IMR-90 (cell line): ENCODE measurements at regions of chr12 and their contacts with region 1.

Region 1: GRCh38 chr12:1776170-1776948 is 44.0 kb upstream of the LRTM2 start:
- DNase-seq: peak; percentile 76
- ATAC-seq: peak; percentile 41
- H3K4me3 ChIP-seq: no peak overlapping the region
- H3K27ac ChIP-seq: no peak overlapping the region
- H3K4me1 ChIP-seq: peaks cover 14% of the 10 kb centered on the region
- H3K27me3 ChIP-seq: no peaks in the 10 kb centered on the region
- CTCF ChIP-seq: no peak
- POLR2A ChIP-seq: no peak
- RAD21 ChIP-seq: no peak

Region 2: DNA sequence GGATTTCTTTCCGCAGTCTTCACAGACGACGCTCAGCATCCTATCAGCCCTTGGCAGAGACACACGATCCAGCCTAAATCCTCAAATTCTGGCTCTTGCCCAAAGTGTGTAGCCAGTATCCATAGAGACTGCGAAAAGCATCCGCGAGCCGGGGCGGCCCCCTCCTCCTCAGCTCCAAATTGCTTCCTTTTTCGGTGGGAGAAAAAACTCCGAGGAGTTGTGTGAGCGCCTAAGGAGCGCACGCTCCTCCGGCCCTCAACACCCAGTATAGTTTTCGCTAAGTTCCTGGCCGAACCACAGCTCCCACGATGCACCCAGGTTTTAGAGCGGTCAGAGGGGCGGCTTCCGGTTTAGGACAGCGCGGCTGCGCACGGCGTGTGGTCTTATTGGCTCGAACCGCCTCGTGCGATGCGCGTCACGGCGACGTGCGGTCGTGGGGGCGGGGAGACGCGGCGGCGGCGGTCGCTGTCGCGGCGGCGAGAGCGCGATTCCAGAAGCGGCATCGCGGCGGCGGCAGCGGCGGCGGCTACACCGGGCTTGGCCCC is 85.7 kb before region 1 on chr12 and contains the start of gene ADIPOR2:
- CTCF ChIA-PET with region 1: no interaction called
- POLR2A ChIA-PET with region 1: no interaction called
- dilution Hi-C with region 1: no loop called
- in situ Hi-C with region 1: no loop called
- intact Hi-C with region 1: loop called (anchors 2 kb)
- DNase-seq: peak; percentile 96
- ATAC-seq: peak; percentile 100
- H3K4me3 ChIP-seq: peak within 1 kb of the TSS; percentile 70
- H3K27ac ChIP-seq: peak within 1 kb of the TSS; percentile 73
- H3K4me1 ChIP-seq: no peaks in the 10 kb centered on the region
- H3K27me3 ChIP-seq: no peaks in the 10 kb centered on the region
- CTCF ChIP-seq: no peak
- POLR2A ChIP-seq: peak; percentile 84
- RAD21 ChIP-seq: no peak
- total RNA-seq, gene ADIPOR2: 24.9 and 27.2 TPM in 2 replicates

Region 3: GRCh38 chr12:1732914-1733313 is 43.4 kb before region 1 on chr12:
- CTCF ChIA-PET with region 1: no interaction called
- POLR2A ChIA-PET with region 1: no interaction called
- dilution Hi-C with region 1: no loop called
- in situ Hi-C with region 1: no loop called
- intact Hi-C with region 1: loop called (anchors 5 kb)
- DNase-seq: no peak
- ATAC-seq: no peak
- H3K4me3 ChIP-seq: no peak overlapping the region
- H3K27ac ChIP-seq: no peak overlapping the region
- H3K4me1 ChIP-seq: no peaks in the 10 kb centered on the region
- H3K27me3 ChIP-seq: no peaks in the 10 kb centered on the region
- CTCF ChIP-seq: no peak
- POLR2A ChIP-seq: no peak
- RAD21 ChIP-seq: no peak